ENCODE measurements at regions of chr1 and their contacts with region 1.

Region 1: GRCh38 chr1:182084487-182085316 is 23.2 kb upstream of the ZNF648 start:
- DNase-seq: peak; percentile 60 to 87 (median 76)
- ATAC-seq: peak; percentile 75
- H3K4me3 ChIP-seq: no peak overlapping the region
- H3K4me3 Mint-ChIP-seq: no peak overlapping the region
- H3K27ac ChIP-seq: no peak overlapping the region
- H3K27ac Mint-ChIP-seq: peak overlapping the region; percentile 82
- H3K4me1 ChIP-seq: peaks cover 53% of the 10 kb centered on the region
- H3K4me1 Mint-ChIP-seq: peaks cover 41% of the 10 kb centered on the region
- H3K27me3 ChIP-seq: no peaks in the 10 kb centered on the region
- H3K27me3 Mint-ChIP-seq: no peaks in the 10 kb centered on the region
- CTCF ChIP-seq: peak; percentile 66

Region 2: DNA sequence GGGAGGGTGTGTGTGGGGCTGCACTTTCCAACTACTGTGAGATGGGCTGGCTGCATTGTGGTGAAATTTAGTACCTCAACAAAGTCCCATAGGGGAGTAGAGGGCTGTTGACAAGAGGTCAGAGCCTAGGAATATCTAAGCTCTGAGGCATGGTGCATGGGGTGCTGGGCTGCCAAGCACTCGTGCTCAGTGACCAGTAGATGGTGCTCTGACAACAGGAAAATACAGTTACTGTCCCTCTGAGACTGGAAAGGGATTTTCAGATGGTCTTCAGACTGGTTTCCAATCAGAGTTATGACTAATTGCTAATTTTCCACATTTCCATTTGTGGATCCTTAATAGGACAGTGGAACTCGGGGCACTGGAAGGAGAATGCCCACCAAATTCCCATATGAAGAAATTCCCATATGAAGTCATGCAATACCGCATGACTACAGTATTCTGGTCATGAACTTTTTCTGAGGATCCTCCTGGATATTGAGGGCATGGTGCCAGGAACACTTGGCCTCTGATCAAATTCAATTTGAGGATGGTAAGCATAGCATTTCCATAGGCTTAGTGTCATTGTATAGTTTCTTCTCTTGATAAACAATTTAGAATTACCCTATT is 605.5 kb before region 1 on chr1:
- CTCF ChIA-PET with region 1: interaction called, 5 read pairs
- POLR2A ChIA-PET with region 1: interaction called, 4 read pairs
- intact Hi-C with region 1: loop called in 1 of 2 experiments (anchors 2 kb)
- DNase-seq: peak in 5 of 14 experiments; percentile 7 to 63 (median 48)
- ATAC-seq: peak; percentile 52
- H3K4me3 ChIP-seq: no peak overlapping the region
- H3K4me3 Mint-ChIP-seq: no peak overlapping the region
- H3K27ac ChIP-seq: no peak overlapping the region
- H3K27ac Mint-ChIP-seq: no peak overlapping the region
- H3K4me1 ChIP-seq: peaks cover 2% of the 10 kb centered on the region
- H3K4me1 Mint-ChIP-seq: no peaks in the 10 kb centered on the region
- H3K27me3 ChIP-seq: peaks cover 27 to 42% of the 10 kb centered on the region in 2 experiments
- H3K27me3 Mint-ChIP-seq: peaks cover 57% of the 10 kb centered on the region
- CTCF ChIP-seq: peak; percentile 60

Region 3: DNA sequence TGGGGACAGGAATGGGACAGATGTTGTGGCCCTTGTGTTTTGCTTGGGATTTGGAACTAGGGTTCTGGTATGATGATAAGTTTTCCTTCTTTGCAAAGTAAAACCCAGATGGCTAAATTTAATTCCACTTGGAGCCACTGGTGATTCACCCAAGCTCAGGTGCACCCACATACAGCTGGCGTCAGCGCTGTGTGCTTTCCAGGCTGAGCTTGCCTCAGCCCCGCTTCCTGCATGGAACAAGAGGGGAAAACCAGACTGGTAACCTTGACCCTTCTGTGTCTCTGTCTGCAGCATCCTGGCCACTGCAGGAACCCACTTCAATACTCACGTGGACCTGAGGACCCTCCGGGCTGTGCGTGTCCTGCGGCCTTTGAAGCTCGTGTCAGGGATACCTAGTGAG is 507.2 kb before region 1 on chr1:
- CTCF ChIA-PET with region 1: no interaction called
- POLR2A ChIA-PET with region 1: no interaction called
- intact Hi-C with region 1: no loop called
- DNase-seq: no peak
- ATAC-seq: no peak
- H3K4me3 ChIP-seq: no peak overlapping the region
- H3K4me3 Mint-ChIP-seq: no peak overlapping the region
- H3K27ac ChIP-seq: no peak overlapping the region
- H3K27ac Mint-ChIP-seq: no peak overlapping the region
- H3K4me1 ChIP-seq: no peaks in the 10 kb centered on the region
- H3K4me1 Mint-ChIP-seq: no peaks in the 10 kb centered on the region
- H3K27me3 ChIP-seq: no peaks in the 10 kb centered on the region
- H3K27me3 Mint-ChIP-seq: peaks cover 4% of the 10 kb centered on the region
- CTCF ChIP-seq: no peak

Region 4: GRCh38 chr1:182143154-182143657 is 58.5 kb after region 1 on chr1:
- CTCF ChIA-PET with region 1: interaction called, 7 read pairs
- POLR2A ChIA-PET with region 1: interaction called, 8 read pairs
- intact Hi-C with region 1: loop called (anchors 1 kb)
- DNase-seq: peak; percentile 73 to 94 (median 88)
- ATAC-seq: peak; percentile 75
- H3K4me3 ChIP-seq: no peak overlapping the region
- H3K4me3 Mint-ChIP-seq: no peak overlapping the region
- H3K27ac ChIP-seq: no peak overlapping the region
- H3K27ac Mint-ChIP-seq: no peak overlapping the region
- H3K4me1 ChIP-seq: peaks cover 3% of the 10 kb centered on the region
- H3K4me1 Mint-ChIP-seq: peaks cover 6% of the 10 kb centered on the region
- H3K27me3 ChIP-seq: no peaks in the 10 kb centered on the region
- H3K27me3 Mint-ChIP-seq: peaks cover 12% of the 10 kb centered on the region
- CTCF ChIP-seq: peak; percentile 84

Region 5: DNA sequence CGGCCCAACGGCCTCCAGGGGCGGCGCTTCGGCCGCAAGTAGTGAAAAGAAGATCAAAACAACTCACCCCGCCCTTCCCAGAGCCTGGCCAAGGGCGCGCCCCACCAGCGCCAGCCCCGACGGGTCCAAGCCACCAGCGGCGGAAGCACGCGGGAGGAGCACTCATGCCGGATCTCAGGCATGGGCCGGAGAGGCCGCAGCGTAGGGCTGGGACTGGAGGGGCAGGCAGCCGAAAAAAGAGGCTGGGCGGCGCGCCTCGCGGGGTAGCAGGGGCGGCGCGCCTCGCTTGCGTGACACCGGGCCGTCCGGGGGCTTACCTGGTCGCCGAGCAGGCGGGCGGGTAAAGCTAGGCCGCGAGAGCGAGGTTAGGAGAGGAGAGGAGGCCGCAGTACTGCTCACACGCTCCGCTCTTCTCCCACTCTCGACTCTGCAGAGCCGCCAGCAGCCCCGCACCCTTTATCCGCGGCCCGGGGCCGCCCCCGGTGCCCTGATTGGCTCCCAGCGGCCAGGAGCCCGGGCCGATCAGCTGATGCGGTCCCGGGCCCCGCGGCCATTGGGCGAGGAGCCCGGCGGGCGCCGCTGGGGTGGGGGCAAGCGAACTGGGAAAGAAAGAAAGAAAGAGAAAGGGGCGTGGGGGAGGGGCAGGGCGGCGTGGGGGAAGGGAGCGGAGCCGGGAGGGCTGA is 306.8 kb after region 1 on chr1 and contains the start of gene GLUL:
- CTCF ChIA-PET with region 1: interaction called, 32 read pairs
- POLR2A ChIA-PET with region 1: interaction called, 10 read pairs
- intact Hi-C with region 1: loop called (anchors 1 kb)
- DNase-seq: peak; percentile 33 to 85 (median 60)
- ATAC-seq: peak; percentile 65
- H3K4me3 ChIP-seq: peak within 1 kb of the TSS; percentile 79
- H3K4me3 Mint-ChIP-seq: peak within 1 kb of the TSS; percentile 94
- H3K27ac ChIP-seq: peak within 1 kb of the TSS in 1 of 2 donors; percentile 17
- H3K27ac Mint-ChIP-seq: peak within 1 kb of the TSS; percentile 83
- H3K4me1 ChIP-seq: peaks cover 27% of the 10 kb centered on the region
- H3K4me1 Mint-ChIP-seq: peaks cover 34% of the 10 kb centered on the region
- H3K27me3 ChIP-seq: no peaks in the 10 kb centered on the region
- H3K27me3 Mint-ChIP-seq: peaks cover 8% of the 10 kb centered on the region
- CTCF ChIP-seq: no peak
- total RNA-seq, gene GLUL: 60.4 to 64.0 TPM

Region 6: GRCh38 chr1:182397771-182398393 is 313.2 kb after region 1 on chr1:
- CTCF ChIA-PET with region 1: interaction called, 32 read pairs
- POLR2A ChIA-PET with region 1: interaction called, 10 read pairs
- intact Hi-C with region 1: loop called (anchors 1 kb)
- DNase-seq: no peak
- ATAC-seq: no peak
- H3K4me3 ChIP-seq: no peak overlapping the region
- H3K4me3 Mint-ChIP-seq: no peak overlapping the region
- H3K27ac ChIP-seq: no peak overlapping the region
- H3K27ac Mint-ChIP-seq: no peak overlapping the region
- H3K4me1 ChIP-seq: peaks cover 3% of the 10 kb centered on the region
- H3K4me1 Mint-ChIP-seq: peaks cover 10% of the 10 kb centered on the region
- H3K27me3 ChIP-seq: no peaks in the 10 kb centered on the region
- H3K27me3 Mint-ChIP-seq: peaks cover 14% of the 10 kb centered on the region
- CTCF ChIP-seq: no peak

Region 7: GRCh38 chr1:182595641-182596240 is 511.0 kb after region 1 on chr1:
- CTCF ChIA-PET with region 1: no interaction called
- POLR2A ChIA-PET with region 1: no interaction called
- intact Hi-C with region 1: loop called in 1 of 2 experiments (anchors 5 kb)
- DNase-seq: peak; percentile 37 to 78 (median 57)
- ATAC-seq: peak; percentile 90
- H3K4me3 ChIP-seq: no peak overlapping the region
- H3K4me3 Mint-ChIP-seq: no peak overlapping the region
- H3K27ac ChIP-seq: no peak overlapping the region
- H3K27ac Mint-ChIP-seq: no peak overlapping the region
- H3K4me1 ChIP-seq: peaks cover 1% of the 10 kb centered on the region
- H3K4me1 Mint-ChIP-seq: peaks cover 4% of the 10 kb centered on the region
- H3K27me3 ChIP-seq: no peaks in the 10 kb centered on the region
- H3K27me3 Mint-ChIP-seq: no peaks in the 10 kb centered on the region
- CTCF ChIP-seq: peak; percentile 88

Region 8: GRCh38 chr1:182781841-182782586 is 697.3 kb after region 1 on chr1:
- CTCF ChIA-PET with region 1: interaction called, 3 read pairs
- POLR2A ChIA-PET with region 1: no interaction called
- intact Hi-C with region 1: loop called (anchors 2 to 5 kb)
- DNase-seq: peak; percentile 45 to 82 (median 62)
- ATAC-seq: peak; percentile 83
- H3K4me3 ChIP-seq: no peak overlapping the region
- H3K4me3 Mint-ChIP-seq: no peak overlapping the region
- H3K27ac ChIP-seq: no peak overlapping the region
- H3K27ac Mint-ChIP-seq: no peak overlapping the region
- H3K4me1 ChIP-seq: peaks cover 5% of the 10 kb centered on the region
- H3K4me1 Mint-ChIP-seq: peaks cover 4% of the 10 kb centered on the region
- H3K27me3 ChIP-seq: peaks cover 0 to 2% of the 10 kb centered on the region in 2 experiments
- H3K27me3 Mint-ChIP-seq: no peaks in the 10 kb centered on the region
- CTCF ChIP-seq: peak; percentile 58

Measured in CD4-positive, alpha-beta T cell (primary cell).